ENCODE measurements at regions of chrX and their contacts with region 1.

Region 1: GRCh38 chrX:107826238-107827029 is 768 bp downstream of the MID2 start:
- DNase-seq: peak; percentile 38
- H3K4me3 Mint-ChIP-seq: peak overlapping the region; percentile 74
- H3K27ac Mint-ChIP-seq: peak overlapping the region; percentile 71
- H3K4me1 Mint-ChIP-seq: peaks cover 43% of the 10 kb centered on the region
- H3K27me3 Mint-ChIP-seq: no peaks in the 10 kb centered on the region

Region 2: GRCh38 chrX:107290019-107290418 is 536.4 kb before region 1 on chrX:
- CTCF ChIA-PET with region 1: no interaction called
- POLR2A ChIA-PET with region 1: no interaction called
- intact Hi-C with region 1: no loop called
- DNase-seq: no peak
- H3K4me3 Mint-ChIP-seq: no peak overlapping the region
- H3K27ac Mint-ChIP-seq: no peak overlapping the region
- H3K4me1 Mint-ChIP-seq: no peaks in the 10 kb centered on the region
- H3K27me3 Mint-ChIP-seq: no peaks in the 10 kb centered on the region

Region 3: GRCh38 chrX:107646735-107647134 is 179.7 kb before region 1 on chrX:
- CTCF ChIA-PET with region 1: no interaction called
- POLR2A ChIA-PET with region 1: no interaction called
- intact Hi-C with region 1: no loop called
- DNase-seq: no peak
- H3K4me3 Mint-ChIP-seq: no peak overlapping the region
- H3K27ac Mint-ChIP-seq: no peak overlapping the region
- H3K4me1 Mint-ChIP-seq: no peaks in the 10 kb centered on the region
- H3K27me3 Mint-ChIP-seq: no peaks in the 10 kb centered on the region

Region 4: GRCh38 chrX:107845625-107846024 is 19.2 kb after region 1 on chrX:
- CTCF ChIA-PET with region 1: no interaction called
- POLR2A ChIA-PET with region 1: no interaction called
- intact Hi-C with region 1: loop called (anchors 1 kb)
- DNase-seq: peak; percentile 44
- H3K4me3 Mint-ChIP-seq: no peak overlapping the region
- H3K27ac Mint-ChIP-seq: no peak overlapping the region
- H3K4me1 Mint-ChIP-seq: peaks cover 9% of the 10 kb centered on the region
- H3K27me3 Mint-ChIP-seq: no peaks in the 10 kb centered on the region